ENCODE measurements at regions of chr1 and their contacts with region 1.

Region 1: DNA sequence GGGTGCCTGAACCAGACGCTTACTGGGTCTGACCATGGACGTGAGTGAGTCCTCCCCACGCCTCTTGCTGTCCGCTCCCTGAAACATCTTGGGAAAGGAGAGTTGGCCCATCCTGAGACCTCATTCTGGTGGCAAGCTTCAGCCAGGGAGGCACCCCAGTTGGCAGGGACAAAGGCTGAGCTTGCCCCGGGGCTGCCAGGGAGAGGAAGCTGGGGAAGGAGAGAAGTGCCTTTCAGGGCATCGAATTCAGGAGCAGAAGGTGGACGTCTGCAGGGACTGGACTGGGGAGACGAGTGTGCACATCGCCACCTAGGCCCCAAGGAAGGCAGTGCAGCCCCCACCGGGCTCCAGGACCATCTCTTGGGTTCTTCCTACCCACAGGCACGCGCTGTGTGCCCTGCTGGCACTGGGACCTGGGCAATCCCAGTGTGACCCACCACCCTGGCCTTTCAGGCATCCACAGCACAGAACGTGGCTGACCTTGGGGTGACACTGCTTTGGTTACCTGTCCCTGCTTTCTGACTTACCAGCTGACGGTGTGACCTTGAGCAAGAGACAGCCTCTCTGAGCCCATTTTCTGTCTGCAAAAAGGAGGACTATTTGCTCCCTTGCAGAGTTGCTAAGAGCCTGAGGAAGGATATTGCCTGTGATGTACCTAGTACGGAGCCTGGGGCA is 133.0 kb upstream of the WNT4 start:
- DNase-seq: peak; percentile 69
- H3K4me3 ChIP-seq: no peak overlapping the region
- H3K27ac ChIP-seq: no peak overlapping the region
- H3K4me1 ChIP-seq: peaks cover 22% of the 10 kb centered on the region
- H3K27me3 ChIP-seq: peaks cover 0 to 5% of the 10 kb centered on the region in 2 experiments
- CTCF ChIP-seq: peak; percentile 75 to 97
- POLR2A ChIP-seq: no peak

Region 2: DNA sequence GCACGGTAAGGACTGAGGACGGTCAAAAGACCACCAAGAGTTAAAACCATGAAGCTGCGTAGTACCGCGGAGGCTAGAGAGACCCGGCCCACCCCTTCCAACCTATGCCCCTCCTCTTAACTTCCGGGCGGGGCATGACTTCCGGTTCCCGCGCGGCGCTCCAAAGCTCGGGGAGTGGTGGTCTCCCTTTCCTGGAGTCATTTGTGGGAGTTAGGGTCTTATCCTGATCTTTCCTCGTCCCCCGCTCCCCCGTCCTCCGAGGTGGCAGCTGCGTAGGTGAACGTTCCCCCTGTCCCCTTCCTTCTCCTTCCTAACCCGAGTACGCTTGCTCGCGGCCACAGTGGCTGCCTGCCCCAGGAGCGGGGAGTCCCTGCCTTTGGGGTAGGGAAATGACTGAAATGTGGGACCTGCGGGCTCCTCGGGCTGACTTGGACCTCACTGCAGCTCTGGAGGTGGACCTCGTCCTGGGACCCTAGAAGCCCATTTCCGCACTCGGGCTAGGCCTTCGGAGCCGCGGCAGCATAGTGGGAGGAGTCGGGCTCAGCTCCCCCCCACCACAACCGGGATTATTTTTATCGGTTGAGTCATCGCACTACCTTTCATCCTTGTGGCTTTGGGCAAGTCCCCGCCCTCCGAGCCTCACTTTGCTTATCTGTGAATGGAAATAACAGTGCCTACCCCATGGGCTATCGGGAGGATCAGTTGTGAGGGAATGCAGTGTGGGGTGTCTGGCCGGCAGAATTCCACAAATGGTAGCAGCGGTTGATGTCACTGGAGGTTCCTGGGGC is 250.3 kb before region 1 on chr1:
- CTCF ChIA-PET with region 1: no interaction called
- POLR2A ChIA-PET with region 1: no interaction called
- dilution Hi-C with region 1: no loop called
- intact Hi-C with region 1: loop called (anchors 10 kb)
- DNase-seq: peak; percentile 88
- H3K4me3 ChIP-seq: peak overlapping the region; percentile 50 to 99 (median 77)
- H3K27ac ChIP-seq: peak overlapping the region; percentile 90
- H3K4me1 ChIP-seq: peaks cover 12% of the 10 kb centered on the region
- H3K27me3 ChIP-seq: no peaks in the 10 kb centered on the region
- CTCF ChIP-seq: no peak
- POLR2A ChIP-seq: peak; percentile 86

Region 3: GRCh38 chr1:22105611-22106207 is 170.1 kb before region 1 on chr1:
- CTCF ChIA-PET with region 1: interaction called, 35 read pairs
- POLR2A ChIA-PET with region 1: no interaction called
- dilution Hi-C with region 1: no loop called
- intact Hi-C with region 1: loop called (anchors 1 kb)
- DNase-seq: peak; percentile 62
- H3K4me3 ChIP-seq: no peak overlapping the region
- H3K27ac ChIP-seq: no peak overlapping the region
- H3K4me1 ChIP-seq: peaks cover 14% of the 10 kb centered on the region
- H3K27me3 ChIP-seq: no peaks in the 10 kb centered on the region
- CTCF ChIP-seq: peak; percentile 66 to 76
- POLR2A ChIP-seq: no peak

Region 4: GRCh38 chr1:22264464-22265341 is 11.2 kb before region 1 on chr1:
- CTCF ChIA-PET with region 1: interaction called, 10 read pairs
- POLR2A ChIA-PET with region 1: no interaction called
- dilution Hi-C with region 1: no loop called
- intact Hi-C with region 1: no loop called
- DNase-seq: no peak
- H3K4me3 ChIP-seq: no peak overlapping the region
- H3K27ac ChIP-seq: no peak overlapping the region
- H3K4me1 ChIP-seq: no peaks in the 10 kb centered on the region
- H3K27me3 ChIP-seq: peaks cover 0 to 2% of the 10 kb centered on the region in 2 experiments
- CTCF ChIP-seq: no peak
- POLR2A ChIP-seq: no peak

Region 5: GRCh38 chr1:22309572-22309971 is 33.7 kb after region 1 on chr1:
- CTCF ChIA-PET with region 1: no interaction called
- POLR2A ChIA-PET with region 1: no interaction called
- dilution Hi-C with region 1: no loop called
- intact Hi-C with region 1: no loop called
- DNase-seq: no peak
- H3K4me3 ChIP-seq: no peak overlapping the region
- H3K27ac ChIP-seq: no peak overlapping the region
- H3K4me1 ChIP-seq: no peaks in the 10 kb centered on the region
- H3K27me3 ChIP-seq: peaks cover 17 to 27% of the 10 kb centered on the region in 2 experiments
- CTCF ChIP-seq: no peak
- POLR2A ChIP-seq: no peak

Region 6: GRCh38 chr1:22420455-22421053 is 144.7 kb after region 1 on chr1:
- CTCF ChIA-PET with region 1: no interaction called
- POLR2A ChIA-PET with region 1: no interaction called
- dilution Hi-C with region 1: no loop called
- intact Hi-C with region 1: no loop called
- DNase-seq: peak; percentile 80
- H3K4me3 ChIP-seq: no peak overlapping the region
- H3K27ac ChIP-seq: no peak overlapping the region
- H3K4me1 ChIP-seq: no peaks in the 10 kb centered on the region
- H3K27me3 ChIP-seq: peaks cover 22 to 24% of the 10 kb centered on the region in 2 experiments
- CTCF ChIP-seq: peak; percentile 75 to 87
- POLR2A ChIP-seq: no peak

Measured in endothelial cell of umbilical vein (primary cell).